ENCODE measurements at regions of chr15 and their contacts with region 1.

Region 1: GRCh38 chr15:50234771-50235170 is 30.8 kb downstream of the HDC start:
- DNase-seq: no peak
- H3K4me3 Mint-ChIP-seq: no peak overlapping the region
- H3K27ac Mint-ChIP-seq: no peak overlapping the region
- H3K4me1 Mint-ChIP-seq: peaks cover 6% of the 10 kb centered on the region
- H3K27me3 Mint-ChIP-seq: no peaks in the 10 kb centered on the region

Region 2: DNA sequence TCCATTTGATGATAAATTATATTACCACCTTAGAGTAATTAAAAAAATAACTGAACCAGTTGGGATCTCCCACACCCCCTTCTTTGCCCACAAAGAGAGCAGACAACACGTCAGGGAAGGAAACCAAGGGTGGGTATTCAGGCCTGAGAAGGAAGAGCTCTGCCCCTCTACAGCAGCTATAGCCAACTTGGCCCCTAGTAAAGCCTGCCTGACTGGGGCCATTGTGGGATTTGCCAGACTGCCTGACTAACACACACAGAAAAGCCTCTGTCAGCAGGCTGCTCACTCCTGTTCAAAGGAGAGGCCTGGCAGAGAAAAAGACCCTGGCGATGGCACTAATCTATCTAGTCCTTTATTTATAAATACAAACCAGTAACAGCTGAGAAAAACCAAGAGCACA is 157.1 kb before region 1 on chr15:
- intact Hi-C with region 1: no loop called
- DNase-seq: no peak
- H3K4me3 Mint-ChIP-seq: no peak overlapping the region
- H3K27ac Mint-ChIP-seq: no peak overlapping the region
- H3K4me1 Mint-ChIP-seq: peaks cover 33% of the 10 kb centered on the region
- H3K27me3 Mint-ChIP-seq: no peaks in the 10 kb centered on the region

Region 3: DNA sequence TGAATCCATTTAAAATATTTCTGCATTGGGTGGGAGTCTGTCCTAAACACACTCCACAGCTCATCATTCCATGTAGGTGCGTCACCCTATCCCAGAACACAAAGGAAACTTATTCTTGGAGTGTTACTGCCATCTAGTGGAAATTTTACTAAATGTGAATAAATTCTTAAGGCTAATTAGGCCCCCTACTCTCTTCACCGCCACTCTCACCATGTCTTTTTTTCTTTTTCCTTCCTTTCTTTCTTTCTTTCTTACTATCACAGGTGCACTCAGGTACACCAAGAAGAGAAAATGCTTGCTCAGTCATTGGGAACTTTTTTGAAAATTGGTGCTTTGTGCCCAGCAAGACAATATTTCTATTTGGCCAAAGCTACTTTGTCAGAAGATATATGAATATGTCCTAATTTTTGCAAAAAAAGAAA is 89.3 kb before region 1 on chr15:
- intact Hi-C with region 1: no loop called
- DNase-seq: no peak
- H3K4me3 Mint-ChIP-seq: no peak overlapping the region
- H3K27ac Mint-ChIP-seq: no peak overlapping the region
- H3K4me1 Mint-ChIP-seq: peaks cover 62% of the 10 kb centered on the region
- H3K27me3 Mint-ChIP-seq: no peaks in the 10 kb centered on the region

Region 4: DNA sequence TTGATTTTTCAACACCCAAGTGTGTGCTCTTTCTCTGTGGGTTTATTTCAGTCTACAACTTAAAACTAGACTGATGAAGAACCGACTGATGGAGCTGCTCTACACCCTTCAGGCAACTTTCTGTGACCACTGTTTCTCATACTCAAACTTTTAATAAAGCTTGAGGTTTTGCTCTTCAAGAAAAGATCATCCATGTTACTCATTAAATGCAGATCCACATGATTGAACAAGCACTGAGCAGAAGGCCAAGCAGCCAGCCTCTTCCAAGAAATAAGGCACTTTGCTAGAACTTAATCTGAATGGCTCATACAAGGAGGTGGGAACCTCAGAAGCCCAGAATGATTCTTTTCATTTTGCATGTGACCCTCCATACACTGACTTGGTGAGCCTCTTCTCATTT is 44.0 kb before region 1 on chr15:
- intact Hi-C with region 1: loop called (anchors 5 kb)
- DNase-seq: no peak
- H3K4me3 Mint-ChIP-seq: no peak overlapping the region
- H3K27ac Mint-ChIP-seq: peak overlapping the region; percentile 18
- H3K4me1 Mint-ChIP-seq: peaks cover 65% of the 10 kb centered on the region
- H3K27me3 Mint-ChIP-seq: no peaks in the 10 kb centered on the region

Region 5: DNA sequence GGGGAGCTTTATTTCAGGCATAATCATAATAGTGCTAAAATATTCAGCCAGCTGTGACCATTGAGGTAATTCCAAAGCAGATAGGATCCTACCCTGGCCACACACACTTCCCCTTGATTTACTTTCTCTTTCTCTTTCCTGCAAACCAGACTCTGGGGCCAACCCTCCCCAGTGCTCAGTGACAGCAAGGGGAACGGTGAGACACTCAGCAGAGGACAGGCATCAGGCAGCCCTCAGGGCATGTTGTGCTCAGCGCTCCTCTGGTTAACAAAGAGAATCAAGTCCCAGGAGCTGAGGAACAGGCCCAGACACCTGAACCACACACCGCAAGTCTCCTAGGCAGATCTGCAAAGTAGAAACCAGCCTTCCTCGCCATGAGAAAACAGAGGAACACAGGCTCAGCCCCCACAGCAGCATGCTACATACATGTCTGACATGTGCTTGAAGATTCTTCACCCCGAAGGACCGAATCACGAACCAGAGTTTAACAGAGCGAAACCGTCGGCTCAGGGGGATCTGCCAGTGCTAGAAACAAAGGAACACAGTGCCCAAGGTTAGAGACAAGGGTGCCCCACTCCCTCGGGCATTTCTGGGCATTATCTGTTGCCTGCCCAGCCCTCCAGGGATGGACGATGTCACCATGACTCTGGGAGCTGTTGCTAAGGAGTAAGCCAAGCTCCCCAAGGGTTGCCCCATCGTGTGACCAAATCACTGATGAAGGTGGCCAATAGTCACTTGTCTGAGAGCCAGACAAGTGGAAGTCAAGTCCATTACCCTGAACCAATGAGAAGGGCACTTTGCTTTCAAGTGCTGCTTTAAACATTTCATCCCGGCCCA is 13.3 kb after region 1 on chr15:
- intact Hi-C with region 1: no loop called
- DNase-seq: peak; percentile 59
- H3K4me3 Mint-ChIP-seq: peak overlapping the region; percentile 67
- H3K27ac Mint-ChIP-seq: peak overlapping the region; percentile 97
- H3K4me1 Mint-ChIP-seq: peaks cover 65% of the 10 kb centered on the region
- H3K27me3 Mint-ChIP-seq: no peaks in the 10 kb centered on the region

Region 6: GRCh38 chr15:50613600-50613999 is 378.8 kb after region 1 on chr15:
- intact Hi-C with region 1: no loop called
- DNase-seq: no peak
- H3K4me3 Mint-ChIP-seq: no peak overlapping the region
- H3K27ac Mint-ChIP-seq: no peak overlapping the region
- H3K4me1 Mint-ChIP-seq: no peaks in the 10 kb centered on the region
- H3K27me3 Mint-ChIP-seq: no peaks in the 10 kb centered on the region

Measured in activated T-helper 1 cell treated with anti-CD3 and anti-CD28 coated beads, Interleukin-12 subunit alpha, Interleukin-12 subunit beta, Interleukin-2, Interleukin-4 antibody, amounts not matched to agents 30 ng/mL and 10 ng/mL and 1 ng/mL, durations not matched to agents 14 hours and 24 hours and 36 hours (primary cell).